GM23248 (cell line): ENCODE measurements at regions of chr16 and their contacts with region 1.

Region 1: GRCh38 chr16:4116337-4117249 is at the start of gene ADCY9:
- DNase-seq: peak; percentile 87
- H3K4me3 ChIP-seq: peak within 1 kb of the TSS; percentile 71
- H3K27ac ChIP-seq: peak within 1 kb of the TSS; percentile 18; the same call in 1 of the 2 replicates
- H3K4me1 ChIP-seq: peaks cover 35% of the 10 kb centered on the region
- H3K27me3 ChIP-seq: no peaks in the 10 kb centered on the region
- total RNA-seq, gene ADCY9: 21.9 and 32.5 TPM in 2 replicates

Region 2: GRCh38 chr16:4176612-4177417 is 60.2 kb after region 1 on chr16:
- in situ Hi-C with region 1: loop called (anchors 10 kb)
- DNase-seq: peak; percentile 91
- H3K4me3 ChIP-seq: no peak overlapping the region
- H3K27ac ChIP-seq: no peak overlapping the region
- H3K4me1 ChIP-seq: peaks cover 31% of the 10 kb centered on the region
- H3K27me3 ChIP-seq: no peaks in the 10 kb centered on the region